GM12878 (cell line): ENCODE measurements at regions of chr1 and their contacts with region 1.

Region 1: DNA sequence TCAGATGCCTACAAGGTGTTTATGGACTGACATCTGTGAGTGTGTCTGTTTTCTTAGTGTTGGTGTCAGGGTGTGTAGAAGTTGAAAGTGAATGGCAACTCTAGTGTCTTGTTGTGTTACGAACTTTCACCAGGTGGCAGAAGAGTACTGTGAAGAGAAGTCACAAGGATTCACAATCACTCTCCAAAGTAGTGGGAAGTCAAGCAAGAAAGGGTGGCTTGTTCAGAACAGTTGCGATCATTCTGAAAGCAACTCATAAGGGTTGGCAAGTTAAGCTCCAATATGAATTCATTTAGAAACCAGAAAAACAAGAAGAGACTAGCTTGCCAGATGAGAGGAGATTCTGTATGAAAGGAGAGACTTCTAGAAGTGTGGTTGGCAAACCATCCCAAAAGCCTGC is 86.1 kb downstream of the FASLG start:
- DNase-seq: peak; percentile 79
- ATAC-seq: peak; percentile 86
- H3K4me3 ChIP-seq: no peak overlapping the region
- H3K27ac ChIP-seq: no peak overlapping the region
- H3K4me1 ChIP-seq: peaks cover 20% of the 10 kb centered on the region
- H3K27me3 ChIP-seq: 0 out of 4 replicates have a peak, but pooled peaks cover 0 to 5% of the 10 kb centered on the region in 2 experiments
- CTCF ChIP-seq: peak; percentile 70 to 86 (median 78)
- EP300 ChIP-seq: no peak
- POLR2A ChIP-seq: no peak
- RAD21 ChIP-seq: peak; percentile 97

Region 2: GRCh38 chr1:172826096-172826743 is 81.2 kb after region 1 on chr1:
- CTCF ChIA-PET with region 1: interaction called, 117 read pairs
- POLR2A ChIA-PET with region 1: no interaction called
- RAD21 ChIA-PET with region 1: interaction called, 26 read pairs
- SMC1A ChIA-PET with region 1: interaction called, 66 read pairs
- in situ Hi-C with region 1: no loop called
- intact Hi-C with region 1: loop called (anchors 1 kb)
- DNase-seq: no peak
- ATAC-seq: peak; percentile 65
- H3K4me3 ChIP-seq: no peak overlapping the region
- H3K27ac ChIP-seq: no peak overlapping the region
- H3K4me1 ChIP-seq: peaks cover 4% of the 10 kb centered on the region; the same call in 1 of the 2 replicates
- H3K27me3 ChIP-seq: no peaks in the 10 kb centered on the region
- CTCF ChIP-seq: peak; percentile 47 to 61 (median 51); a peak in 5 of 6 replicates
- EP300 ChIP-seq: no peak
- POLR2A ChIP-seq: no peak
- RAD21 ChIP-seq: peak; percentile 81

Region 3: DNA sequence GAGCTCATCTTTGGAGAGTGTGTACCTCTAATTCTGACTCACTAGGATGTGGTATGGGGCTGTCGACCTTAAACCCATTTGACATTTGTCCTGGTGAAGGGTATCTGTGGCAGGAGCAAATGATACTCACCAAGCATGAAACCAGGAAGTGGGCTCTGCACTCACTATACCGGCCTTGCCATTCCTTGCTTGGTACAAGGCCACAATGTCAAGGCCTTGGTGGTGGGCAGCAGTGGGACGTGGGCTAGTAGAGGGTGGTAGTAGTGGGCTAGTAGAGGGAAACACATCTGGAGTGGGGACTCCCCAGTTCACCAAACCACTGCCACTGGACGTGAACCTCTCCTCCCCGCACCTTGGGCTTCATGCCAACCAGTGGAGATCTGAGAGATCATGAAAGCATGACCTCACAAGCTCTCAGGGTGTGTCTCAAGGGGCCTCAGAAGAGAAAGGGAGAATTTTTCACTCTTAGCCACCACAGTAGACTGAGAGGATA is 450.6 kb after region 1 on chr1:
- CTCF ChIA-PET with region 1: interaction called, 322 read pairs
- POLR2A ChIA-PET with region 1: no interaction called
- RAD21 ChIA-PET with region 1: interaction called, 201 read pairs
- SMC1A ChIA-PET with region 1: interaction called, 281 read pairs
- in situ Hi-C with region 1: no loop called
- intact Hi-C with region 1: no loop called
- DNase-seq: peak; percentile 74
- ATAC-seq: peak; percentile 88
- H3K4me3 ChIP-seq: no peak overlapping the region
- H3K27ac ChIP-seq: no peak overlapping the region
- H3K4me1 ChIP-seq: peaks cover 12% of the 10 kb centered on the region
- H3K27me3 ChIP-seq: no peaks in the 10 kb centered on the region
- CTCF ChIP-seq: no peak
- EP300 ChIP-seq: no peak; a peak in 1 of 4 replicates
- POLR2A ChIP-seq: no peak
- RAD21 ChIP-seq: 0 out of 2 replicates have a peak, but pooled peaks have one; percentile 13

Region 4: GRCh38 chr1:173420330-173420806 is 675.4 kb after region 1 on chr1:
- CTCF ChIA-PET with region 1: interaction called, 11 read pairs
- POLR2A ChIA-PET with region 1: no interaction called
- RAD21 ChIA-PET with region 1: interaction called, 27 read pairs
- SMC1A ChIA-PET with region 1: interaction called, 10 read pairs
- in situ Hi-C with region 1: no loop called
- intact Hi-C with region 1: loop called (anchors 2 kb)
- DNase-seq: no peak
- ATAC-seq: peak; percentile 26
- H3K4me3 ChIP-seq: no peak overlapping the region
- H3K27ac ChIP-seq: no peak overlapping the region
- H3K4me1 ChIP-seq: peaks cover 39% of the 10 kb centered on the region
- H3K27me3 ChIP-seq: no peaks in the 10 kb centered on the region
- CTCF ChIP-seq: peak; percentile 68 to 80 (median 73)
- EP300 ChIP-seq: no peak
- POLR2A ChIP-seq: no peak
- RAD21 ChIP-seq: peak; percentile 90

Region 5: GRCh38 chr1:173937062-173937461 is 1192.0 kb after region 1 on chr1:
- CTCF ChIA-PET with region 1: no interaction called
- POLR2A ChIA-PET with region 1: no interaction called
- RAD21 ChIA-PET with region 1: no interaction called
- SMC1A ChIA-PET with region 1: no interaction called
- in situ Hi-C with region 1: no loop called
- intact Hi-C with region 1: loop called (anchors 10 kb)
- DNase-seq: no peak
- ATAC-seq: peak; percentile 60
- H3K4me3 ChIP-seq: no peak overlapping the region
- H3K27ac ChIP-seq: no peak overlapping the region
- H3K4me1 ChIP-seq: no peaks in the 10 kb centered on the region
- H3K27me3 ChIP-seq: no peaks in the 10 kb centered on the region
- CTCF ChIP-seq: no peak
- EP300 ChIP-seq: no peak
- POLR2A ChIP-seq: no peak
- RAD21 ChIP-seq: no peak

Region 6: GRCh38 chr1:174726167-174726879 is 1981.3 kb after region 1 on chr1:
- CTCF ChIA-PET with region 1: interaction called, 6 read pairs
- POLR2A ChIA-PET with region 1: no interaction called
- RAD21 ChIA-PET with region 1: no interaction called
- SMC1A ChIA-PET with region 1: no interaction called
- in situ Hi-C with region 1: no loop called
- intact Hi-C with region 1: loop called (anchors 5 kb)
- DNase-seq: no peak
- ATAC-seq: peak; percentile 48; the same call in 2 of the 3 replicates
- H3K4me3 ChIP-seq: no peak overlapping the region
- H3K27ac ChIP-seq: no peak overlapping the region
- H3K4me1 ChIP-seq: peaks cover 4% of the 10 kb centered on the region
- H3K27me3 ChIP-seq: no peaks in the 10 kb centered on the region
- CTCF ChIP-seq: peak; percentile 27 to 40 (median 29); a peak in 4 of 6 replicates
- EP300 ChIP-seq: no peak
- POLR2A ChIP-seq: no peak
- RAD21 ChIP-seq: peak; percentile 41; the same call in 1 of the 2 replicates